CD4-positive, alpha-beta memory T cell (primary cell): ENCODE measurements at regions of chr20 and their contacts with region 1.

Region 1: DNA sequence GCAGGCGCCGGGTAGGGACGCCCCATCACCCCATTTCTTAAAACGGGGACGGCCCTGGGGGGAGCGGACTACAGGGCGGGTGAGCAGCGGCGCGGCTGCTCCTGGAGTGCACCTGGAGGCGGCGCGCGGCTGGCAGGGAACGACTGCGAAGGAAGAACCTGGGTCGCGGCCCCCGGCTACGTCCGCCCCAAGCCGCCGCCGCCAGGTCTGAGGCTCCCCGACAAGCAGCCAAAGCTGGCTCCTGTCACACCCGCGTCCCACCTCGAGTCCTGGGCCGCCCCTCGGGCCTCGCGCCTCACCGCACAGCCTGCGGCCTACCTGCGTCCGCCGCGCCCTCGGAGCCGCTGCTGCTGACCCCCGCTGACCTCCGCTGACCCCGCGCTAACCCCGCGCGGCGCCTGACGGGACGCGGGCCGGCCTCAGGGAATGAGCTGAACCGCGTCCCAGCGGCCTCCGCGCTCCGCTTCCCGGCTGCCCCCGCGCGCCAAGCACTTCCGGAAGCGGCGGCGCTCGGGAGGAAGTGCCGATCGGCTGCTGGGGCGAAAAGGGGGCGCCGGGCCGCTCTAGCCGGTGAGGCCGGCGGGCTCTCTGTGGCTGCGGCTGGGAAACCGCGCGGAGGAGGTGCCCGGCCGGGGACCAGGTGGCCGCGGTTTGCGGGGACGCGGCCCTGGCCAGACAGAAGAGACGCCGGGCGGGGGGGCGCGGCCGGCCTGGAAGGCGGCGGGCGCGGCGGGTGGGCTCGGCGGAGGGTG is at the starts of genes ARFRP1 and ZGPAT:
- DNase-seq: peak; percentile 85 to 91 (median 86)
- H3K4me3 ChIP-seq: peak within 1 kb of the TSS; percentile 57 to 87
- H3K4me3 Mint-ChIP-seq: peak within 1 kb of the TSS; percentile 86 to 95 (median 90)
- H3K27ac ChIP-seq: peak within 1 kb of the TSS; percentile 65
- H3K27ac Mint-ChIP-seq: peak within 1 kb of the TSS; percentile 86 to 95 (median 90)
- H3K4me1 ChIP-seq: peaks cover 52% of the 10 kb centered on the region
- H3K4me1 Mint-ChIP-seq: peaks cover 24 to 61% (median 38%) of the 10 kb centered on the region in 4 donors
- H3K27me3 ChIP-seq: no peaks in the 10 kb centered on the region
- H3K27me3 Mint-ChIP-seq: no peaks in the 10 kb centered on the region
- total RNA-seq, gene ARFRP1: 85.6 to 92.0 TPM
- total RNA-seq, gene ZGPAT: 51.8 to 55.3 TPM

Region 2: DNA sequence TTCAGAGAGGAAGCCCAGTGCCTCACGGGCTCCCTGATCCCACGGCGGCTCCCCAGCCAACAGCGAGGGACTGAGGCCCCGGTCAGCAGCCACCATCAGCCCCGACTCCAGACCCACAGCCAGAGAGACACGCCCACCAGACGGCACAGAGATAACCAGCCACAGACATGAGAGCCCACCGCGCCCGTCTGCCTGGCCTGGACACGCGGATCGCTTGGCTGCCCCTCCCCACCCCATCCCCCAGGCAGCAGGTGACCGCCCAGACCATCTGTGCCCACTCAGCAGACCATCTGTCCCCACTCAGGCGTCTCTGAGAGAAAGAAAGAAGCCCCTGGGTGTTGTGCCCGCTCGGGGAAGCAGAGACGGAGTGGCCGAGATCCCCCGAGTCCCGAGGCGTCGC is 291.1 kb before region 1 on chr20:
- CTCF ChIA-PET with region 1: no interaction called
- POLR2A ChIA-PET with region 1: no interaction called
- intact Hi-C with region 1: no loop called
- DNase-seq: no peak
- H3K4me3 ChIP-seq: no peak overlapping the region
- H3K4me3 Mint-ChIP-seq: no peak overlapping the region
- H3K27ac ChIP-seq: no peak overlapping the region
- H3K27ac Mint-ChIP-seq: no peak overlapping the region
- H3K4me1 ChIP-seq: no peaks in the 10 kb centered on the region
- H3K4me1 Mint-ChIP-seq: peaks cover 0 to 4% (median 2%) of the 10 kb centered on the region in 4 donors
- H3K27me3 ChIP-seq: no peaks in the 10 kb centered on the region
- H3K27me3 Mint-ChIP-seq: peaks cover 4 to 10% of the 10 kb centered on the region in 2 donors

Region 3: GRCh38 chr20:63558804-63559484 is 148.8 kb before region 1 on chr20:
- CTCF ChIA-PET with region 1: no interaction called
- POLR2A ChIA-PET with region 1: no interaction called
- intact Hi-C with region 1: no loop called
- DNase-seq: no peak
- H3K4me3 ChIP-seq: no peak overlapping the region
- H3K4me3 Mint-ChIP-seq: peak overlapping the region in 1 of 8 donors; percentile 76
- H3K27ac ChIP-seq: no peak overlapping the region
- H3K27ac Mint-ChIP-seq: peak overlapping the region in 1 of 7 donors; percentile 52
- H3K4me1 ChIP-seq: peaks cover 6% of the 10 kb centered on the region
- H3K4me1 Mint-ChIP-seq: peaks cover 0 to 7% (median 0%) of the 10 kb centered on the region in 4 donors
- H3K27me3 ChIP-seq: no peaks in the 10 kb centered on the region
- H3K27me3 Mint-ChIP-seq: no peaks in the 10 kb centered on the region

Region 4: GRCh38 chr20:63627129-63627750 is 80.5 kb before region 1 on chr20:
- CTCF ChIA-PET with region 1: no interaction called
- POLR2A ChIA-PET with region 1: interaction called, 10 read pairs
- intact Hi-C with region 1: no loop called
- DNase-seq: peak; percentile 92 to 99 (median 96)
- H3K4me3 ChIP-seq: peak overlapping the region; percentile 91 to 95
- H3K4me3 Mint-ChIP-seq: peak overlapping the region; percentile 94 to 99 (median 96)
- H3K27ac ChIP-seq: peak overlapping the region; percentile 86
- H3K27ac Mint-ChIP-seq: peak overlapping the region; percentile 57 to 96 (median 90)
- H3K4me1 ChIP-seq: peaks cover 41% of the 10 kb centered on the region
- H3K4me1 Mint-ChIP-seq: peaks cover 19 to 54% (median 37%) of the 10 kb centered on the region in 4 donors
- H3K27me3 ChIP-seq: no peaks in the 10 kb centered on the region
- H3K27me3 Mint-ChIP-seq: no peaks in the 10 kb centered on the region

Region 5: DNA sequence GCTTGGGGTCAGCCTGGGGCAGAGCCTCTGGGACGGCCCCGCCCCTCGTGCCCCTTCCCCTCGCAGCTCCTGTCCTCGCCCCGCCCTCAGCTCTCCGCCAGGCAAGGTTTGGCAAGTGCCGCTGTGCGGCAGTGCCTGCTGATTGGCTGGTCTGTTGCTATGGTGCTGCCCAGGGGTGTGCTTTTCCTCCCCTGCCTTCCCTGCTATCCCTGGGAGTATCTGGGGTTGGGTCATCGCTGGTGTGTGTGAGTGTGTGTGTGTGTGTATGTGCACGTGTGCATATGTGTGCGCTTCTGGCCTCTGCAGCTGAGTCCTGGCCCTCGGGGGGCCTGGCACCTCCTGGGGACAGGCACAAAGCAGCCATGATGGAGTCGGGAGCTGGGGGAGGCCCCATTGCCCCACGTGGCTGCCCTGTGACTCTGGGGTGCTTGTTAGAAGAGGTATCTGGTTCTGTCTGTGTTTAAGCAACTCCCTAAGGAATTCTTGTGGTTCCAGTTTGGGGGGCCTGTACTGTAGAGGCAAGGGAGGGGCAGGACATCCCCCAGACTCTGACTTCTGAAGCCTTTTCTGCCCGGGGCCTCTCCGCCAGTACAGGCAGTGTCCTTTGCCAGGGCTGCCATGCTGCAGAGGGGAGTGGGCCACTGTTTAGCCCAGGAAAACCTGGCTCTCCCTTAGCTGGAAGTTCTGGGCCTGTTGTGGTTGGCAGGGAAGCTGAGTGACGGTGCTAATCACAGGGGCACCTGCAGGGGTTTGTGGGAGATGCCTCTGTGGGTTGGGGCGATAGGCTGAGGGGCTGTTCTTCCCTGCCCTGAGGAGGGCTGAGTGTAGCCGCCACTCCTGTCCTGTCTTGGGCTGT is 42.6 kb before region 1 on chr20:
- CTCF ChIA-PET with region 1: no interaction called
- POLR2A ChIA-PET with region 1: no interaction called
- intact Hi-C with region 1: no loop called
- DNase-seq: no peak
- H3K4me3 ChIP-seq: no peak overlapping the region
- H3K4me3 Mint-ChIP-seq: no peak overlapping the region
- H3K27ac ChIP-seq: no peak overlapping the region
- H3K27ac Mint-ChIP-seq: no peak overlapping the region
- H3K4me1 ChIP-seq: no peaks in the 10 kb centered on the region
- H3K4me1 Mint-ChIP-seq: peaks cover 0 to 2% (median 2%) of the 10 kb centered on the region in 4 donors
- H3K27me3 ChIP-seq: no peaks in the 10 kb centered on the region
- H3K27me3 Mint-ChIP-seq: no peaks in the 10 kb centered on the region

Region 6: GRCh38 chr20:63734111-63734945 is 26.6 kb after region 1 on chr20:
- CTCF ChIA-PET with region 1: interaction called, 26 read pairs
- POLR2A ChIA-PET with region 1: interaction called, 202 read pairs
- intact Hi-C with region 1: loop called (anchors 1 kb)
- DNase-seq: no peak
- H3K4me3 ChIP-seq: no peak overlapping the region
- H3K4me3 Mint-ChIP-seq: peak overlapping the region in 3 of 8 donors; percentile 12 to 54 (median 46)
- H3K27ac ChIP-seq: no peak overlapping the region
- H3K27ac Mint-ChIP-seq: peak overlapping the region in 3 of 7 donors; percentile 50 to 69 (median 60)
- H3K4me1 ChIP-seq: peaks cover 54% of the 10 kb centered on the region
- H3K4me1 Mint-ChIP-seq: peaks cover 19 to 28% (median 20%) of the 10 kb centered on the region in 4 donors
- H3K27me3 ChIP-seq: no peaks in the 10 kb centered on the region
- H3K27me3 Mint-ChIP-seq: no peaks in the 10 kb centered on the region

Region 7: DNA sequence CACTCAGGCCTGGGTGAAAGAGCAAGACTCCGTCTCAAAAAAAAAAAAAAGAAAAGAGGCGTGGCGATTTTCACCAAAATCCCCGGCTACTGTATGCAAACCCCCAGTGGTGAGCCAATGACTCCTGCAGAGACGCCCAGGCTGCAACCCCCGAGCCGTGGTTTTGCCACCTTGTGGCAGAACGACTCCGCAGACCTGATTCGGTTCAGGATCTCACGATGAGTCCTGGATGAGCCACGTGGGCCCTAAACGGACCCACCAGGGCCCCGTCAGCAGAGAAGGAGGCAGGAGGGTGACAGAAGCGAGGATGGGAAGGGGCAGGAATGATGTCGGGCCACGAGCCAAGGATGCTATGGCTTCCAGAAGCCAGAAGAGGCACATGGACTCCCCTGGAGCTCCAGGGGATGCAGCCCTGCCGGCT is 74.3 kb after region 1 on chr20:
- CTCF ChIA-PET with region 1: interaction called, 6 read pairs
- POLR2A ChIA-PET with region 1: interaction called, 5 read pairs
- intact Hi-C with region 1: loop called (anchors 1 kb)
- DNase-seq: peak; percentile 65 to 83 (median 73)
- H3K4me3 ChIP-seq: no peak overlapping the region
- H3K4me3 Mint-ChIP-seq: peak overlapping the region in 6 of 8 donors; percentile 55 to 80 (median 70)
- H3K27ac ChIP-seq: no peak overlapping the region
- H3K27ac Mint-ChIP-seq: peak overlapping the region; percentile 17 to 90 (median 82)
- H3K4me1 ChIP-seq: peaks cover 14% of the 10 kb centered on the region
- H3K4me1 Mint-ChIP-seq: peaks cover 16 to 27% (median 17%) of the 10 kb centered on the region in 4 donors
- H3K27me3 ChIP-seq: no peaks in the 10 kb centered on the region
- H3K27me3 Mint-ChIP-seq: no peaks in the 10 kb centered on the region

Region 8: GRCh38 chr20:63942250-63942959 is 234.7 kb after region 1 on chr20:
- CTCF ChIA-PET with region 1: no interaction called
- POLR2A ChIA-PET with region 1: no interaction called
- intact Hi-C with region 1: no loop called
- DNase-seq: peak in 4 of 5 donors; percentile 32 to 39 (median 33)
- H3K4me3 ChIP-seq: no peak overlapping the region
- H3K4me3 Mint-ChIP-seq: peak overlapping the region in 4 of 8 donors; percentile 35 to 64 (median 48)
- H3K27ac ChIP-seq: peak overlapping the region; percentile 51
- H3K27ac Mint-ChIP-seq: peak overlapping the region in 6 of 7 donors; percentile 70 to 92 (median 80)
- H3K4me1 ChIP-seq: peaks cover 30% of the 10 kb centered on the region
- H3K4me1 Mint-ChIP-seq: peaks cover 10 to 34% (median 25%) of the 10 kb centered on the region in 4 donors
- H3K27me3 ChIP-seq: no peaks in the 10 kb centered on the region
- H3K27me3 Mint-ChIP-seq: no peaks in the 10 kb centered on the region

Region 9: DNA sequence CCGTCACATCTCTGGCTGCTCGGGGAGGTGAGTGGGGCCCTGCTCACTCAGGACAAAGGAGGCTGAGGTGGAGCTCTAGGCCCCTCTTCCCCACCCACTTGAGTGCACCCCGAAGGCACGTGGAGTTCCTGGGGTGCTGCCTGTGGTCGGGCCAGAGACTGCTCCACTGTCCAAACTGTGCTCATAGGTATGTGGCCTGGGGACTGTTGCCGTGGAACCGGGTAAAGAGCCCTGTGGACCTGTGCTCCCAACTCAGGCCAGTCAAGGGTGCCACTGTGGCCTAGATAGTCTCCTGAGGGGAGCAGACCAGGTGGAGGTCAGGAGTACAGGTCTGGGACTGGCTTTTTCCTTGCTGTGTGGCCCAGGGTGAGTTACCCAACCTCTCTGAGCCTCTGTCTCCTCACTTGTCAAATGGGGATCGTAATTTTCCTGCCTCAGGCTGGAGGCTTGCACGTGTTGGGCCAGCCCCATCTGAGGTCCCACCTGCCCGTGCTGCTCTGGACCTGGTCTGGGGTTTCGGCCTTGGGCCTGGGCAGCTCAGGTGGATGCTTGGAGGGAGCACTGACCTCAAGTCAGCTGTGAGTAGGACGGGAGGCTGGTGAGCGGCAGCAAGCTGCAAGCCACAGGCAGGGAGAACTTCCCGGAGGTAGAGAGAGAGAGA is 412.1 kb after region 1 on chr20:
- CTCF ChIA-PET with region 1: no interaction called
- POLR2A ChIA-PET with region 1: no interaction called
- intact Hi-C with region 1: loop called (anchors 1 kb)
- DNase-seq: no peak
- H3K4me3 ChIP-seq: peak overlapping the region; percentile 12 to 47
- H3K4me3 Mint-ChIP-seq: peak overlapping the region; percentile 32 to 82 (median 77)
- H3K27ac ChIP-seq: no peak overlapping the region
- H3K27ac Mint-ChIP-seq: peak overlapping the region in 5 of 7 donors; percentile 48 to 91 (median 79)
- H3K4me1 ChIP-seq: peaks cover 11% of the 10 kb centered on the region
- H3K4me1 Mint-ChIP-seq: peaks cover 3 to 10% (median 7%) of the 10 kb centered on the region in 4 donors
- H3K27me3 ChIP-seq: peaks cover 10% of the 10 kb centered on the region
- H3K27me3 Mint-ChIP-seq: peaks cover 5 to 10% of the 10 kb centered on the region in 2 donors